ENCODE measurements at regions of chr19 and their contacts with region 1.

Region 1: DNA sequence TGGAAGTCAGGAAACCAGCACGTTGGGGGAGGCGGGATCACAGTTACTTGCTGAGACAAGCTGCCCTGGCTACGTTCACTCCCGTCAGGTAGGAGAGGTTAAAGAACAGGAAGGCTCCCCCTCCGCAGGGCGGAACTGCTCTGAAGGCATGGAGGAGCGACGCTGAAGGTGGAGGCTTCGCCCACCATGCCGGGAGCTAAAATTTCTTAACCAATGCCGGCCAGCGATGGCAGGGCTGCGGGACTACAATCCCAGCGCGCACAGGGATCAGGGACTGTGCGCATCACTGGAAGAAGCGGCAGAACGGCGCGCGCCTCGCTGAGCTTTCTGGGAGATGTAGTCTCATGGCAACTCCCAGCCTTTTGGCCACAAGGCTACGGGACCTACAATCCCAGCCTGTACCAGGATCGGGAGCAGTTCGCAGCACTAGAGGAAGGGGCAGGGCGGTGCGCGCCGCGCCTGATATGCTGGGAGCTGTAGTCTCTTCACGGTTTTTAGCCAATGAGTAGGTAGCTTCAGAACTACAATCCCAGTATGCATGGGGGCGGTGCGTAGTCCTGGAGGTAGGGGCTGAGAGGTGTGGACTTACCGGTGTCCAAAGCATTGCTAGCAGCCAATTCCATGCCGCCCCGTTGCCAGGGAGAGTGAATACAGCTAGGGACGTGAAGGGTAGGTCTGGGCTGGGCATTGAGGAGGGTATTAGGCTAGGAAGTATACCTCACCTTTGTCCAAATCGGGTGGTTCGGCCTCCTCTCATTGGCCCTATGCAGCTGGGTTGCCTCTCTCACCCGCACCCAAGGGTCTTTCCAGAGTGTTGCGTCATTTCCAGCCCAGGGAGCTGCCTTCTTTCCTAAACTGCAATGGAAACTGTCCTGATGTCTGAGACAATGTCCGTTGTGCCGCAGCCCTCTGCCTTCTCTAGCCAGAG is 12.8 kb upstream of the ZNF682 start:
- DNase-seq: peak; percentile 92 to 97
- H3K4me3 ChIP-seq: peak overlapping the region; percentile 78
- H3K27ac ChIP-seq: peak overlapping the region; percentile 73
- H3K4me1 ChIP-seq: 0 out of 2 replicates have a peak, but pooled peaks cover 4% of the 10 kb centered on the region
- H3K27me3 ChIP-seq: no peaks in the 10 kb centered on the region
- CTCF ChIP-seq: no peak

Region 2: GRCh38 chr19:19911150-19911549 is 141.0 kb before region 1 on chr19:
- CTCF ChIA-PET with region 1: no interaction called
- POLR2A ChIA-PET with region 1: no interaction called
- intact Hi-C with region 1: no loop called
- DNase-seq: no peak
- H3K4me3 ChIP-seq: no peak overlapping the region
- H3K27ac ChIP-seq: no peak overlapping the region
- H3K4me1 ChIP-seq: no peaks in the 10 kb centered on the region
- H3K27me3 ChIP-seq: no peaks in the 10 kb centered on the region
- CTCF ChIP-seq: no peak

Region 3: GRCh38 chr19:20039203-20039723 is 12.8 kb before region 1 on chr19 and contains the start of gene ZNF682:
- CTCF ChIA-PET with region 1: no interaction called
- POLR2A ChIA-PET with region 1: interaction called, 12 read pairs
- intact Hi-C with region 1: loop called (anchors 1 kb)
- DNase-seq: peak; percentile 91 to 93
- H3K4me3 ChIP-seq: peak within 1 kb of the TSS; percentile 72
- H3K27ac ChIP-seq: peak within 1 kb of the TSS; percentile 44
- H3K4me1 ChIP-seq: peaks cover 8% of the 10 kb centered on the region
- H3K27me3 ChIP-seq: no peaks in the 10 kb centered on the region
- CTCF ChIP-seq: no peak
- total RNA-seq, gene ZNF682: 3.9 and 4.7 TPM in 2 replicates

Region 4: DNA sequence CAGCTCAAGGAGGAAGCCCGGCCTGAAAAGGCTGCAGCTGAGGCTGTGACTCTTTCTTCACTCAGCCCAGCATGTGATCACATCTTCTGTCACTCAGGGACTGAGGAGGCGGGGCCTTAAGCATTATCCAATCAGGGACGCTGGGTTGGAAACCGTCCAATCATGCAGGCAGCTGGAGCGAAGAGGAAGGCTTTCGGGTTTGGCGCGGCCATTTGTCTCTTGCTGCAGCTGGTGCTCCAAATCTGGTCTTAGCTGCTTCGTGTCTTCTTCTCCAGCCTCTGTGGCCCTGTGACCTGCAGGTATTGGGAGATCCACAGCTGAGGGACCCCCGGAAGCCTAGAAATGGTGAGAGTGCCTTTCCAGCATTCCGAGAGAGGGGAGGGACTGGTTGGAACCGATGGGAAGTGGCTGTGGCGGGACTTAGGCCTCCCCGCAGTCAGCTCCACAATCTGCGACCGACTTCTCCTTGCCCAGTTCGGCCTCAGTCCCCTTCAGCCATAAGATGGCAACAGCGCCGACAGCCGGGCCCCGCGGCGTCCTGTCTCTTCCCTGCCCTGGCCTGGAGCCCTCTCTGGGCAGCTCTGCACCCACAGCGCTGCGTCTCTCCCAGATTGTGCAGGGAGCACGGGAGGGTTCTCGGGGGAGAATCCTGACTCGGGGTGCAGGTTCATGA is 25.8 kb after region 1 on chr19 and contains the start of gene ZNF90:
- CTCF ChIA-PET with region 1: no interaction called
- POLR2A ChIA-PET with region 1: interaction called, 5 read pairs
- intact Hi-C with region 1: loop called (anchors 2 kb)
- DNase-seq: peak; percentile 81 to 95
- H3K4me3 ChIP-seq: peak within 1 kb of the TSS; percentile 65
- H3K27ac ChIP-seq: no peak within 1 kb of the TSS
- H3K4me1 ChIP-seq: peaks cover 8% of the 10 kb centered on the region; the same call in 1 of the 2 replicates
- H3K27me3 ChIP-seq: no peaks in the 10 kb centered on the region
- CTCF ChIP-seq: peak; percentile 21; the same call in 1 of the 2 replicates
- total RNA-seq, gene ZNF90: 3.7 and 4.2 TPM in 2 replicates